GM12878 (cell line): ENCODE measurements at regions of chr2 and their contacts with region 1.

Region 1: DNA sequence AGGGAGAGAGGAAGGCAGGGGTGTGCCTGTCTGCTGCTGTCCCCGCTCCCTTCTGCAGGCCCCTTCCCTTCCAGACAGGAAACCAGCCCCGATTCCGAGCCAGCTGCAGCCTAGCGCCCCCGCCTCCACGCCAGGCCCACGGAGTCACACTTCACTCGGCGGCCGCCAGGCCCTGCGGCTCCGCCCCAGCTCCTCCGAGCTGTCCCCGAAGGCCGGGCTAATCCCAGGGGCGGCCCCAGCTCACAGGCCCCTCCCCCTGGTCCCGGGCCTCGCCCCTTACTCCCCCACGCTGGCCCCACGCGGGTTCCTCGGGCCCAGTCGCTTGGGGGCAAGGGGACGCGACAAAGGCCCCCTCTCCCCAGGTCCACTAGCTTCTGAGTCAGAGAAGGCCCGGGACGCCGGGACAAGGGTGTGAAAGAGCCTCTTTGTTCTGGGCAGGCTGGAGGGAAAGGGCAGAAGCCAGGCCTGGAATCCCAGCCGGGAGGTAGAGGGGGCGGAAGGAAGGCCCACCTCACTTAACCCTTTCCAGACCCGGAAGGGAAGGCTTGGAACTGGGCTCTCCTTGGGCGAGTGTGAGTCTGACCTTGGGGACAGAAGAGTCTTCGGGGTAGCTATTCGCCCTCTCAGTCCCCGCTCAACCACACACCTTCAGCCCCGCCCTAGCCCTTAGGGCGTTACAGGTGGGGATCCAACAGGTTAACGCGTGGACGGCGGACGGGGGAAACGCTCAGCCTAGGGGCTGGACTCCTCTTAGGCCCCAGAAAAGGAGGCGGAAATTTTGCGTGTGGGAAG is 1.2 kb downstream of the RTKN start:
- DNase-seq: no peak
- ATAC-seq: peak; percentile 98
- H3K4me3 ChIP-seq: peak overlapping the region; percentile 61; the same call in 1 of the 2 replicates
- H3K27ac ChIP-seq: 0 out of 2 replicates have a peak overlapping the region, but pooled peaks have one; percentile 2
- H3K4me1 ChIP-seq: peaks cover 23% of the 10 kb centered on the region
- H3K27me3 ChIP-seq: peaks cover 2 to 10% of the 10 kb centered on the region in 2 experiments; a peak in 3 of 4 replicates
- CTCF ChIP-seq: peak in 2 of 3 experiments; percentile 19 to 38; a peak in 3 of 6 replicates
- EP300 ChIP-seq: no peak
- POLR2A ChIP-seq: peak; percentile 77
- RAD21 ChIP-seq: no peak

Region 2: GRCh38 chr2:74364533-74365505 is 75.8 kb before region 1 on chr2:
- CTCF ChIA-PET with region 1: no interaction called
- POLR2A ChIA-PET with region 1: no interaction called
- RAD21 ChIA-PET with region 1: no interaction called
- SMC1A ChIA-PET with region 1: no interaction called
- in situ Hi-C with region 1: no loop called
- intact Hi-C with region 1: no loop called
- DNase-seq: no peak
- ATAC-seq: no peak
- H3K4me3 ChIP-seq: no peak overlapping the region
- H3K27ac ChIP-seq: no peak overlapping the region
- H3K4me1 ChIP-seq: no peaks in the 10 kb centered on the region
- H3K27me3 ChIP-seq: no peaks in the 10 kb centered on the region
- CTCF ChIP-seq: no peak
- EP300 ChIP-seq: no peak
- POLR2A ChIP-seq: no peak
- RAD21 ChIP-seq: no peak

Region 3: GRCh38 chr2:74421221-74421870 is 19.2 kb before region 1 on chr2 and contains the starts of genes C2orf81 and WDR54:
- CTCF ChIA-PET with region 1: interaction called, 6 read pairs
- POLR2A ChIA-PET with region 1: interaction called, 21 read pairs
- RAD21 ChIA-PET with region 1: interaction called, 6 read pairs
- SMC1A ChIA-PET with region 1: interaction called, 3 read pairs
- in situ Hi-C with region 1: no loop called
- intact Hi-C with region 1: no loop called
- DNase-seq: peak; percentile 84
- ATAC-seq: peak; percentile 96
- H3K4me3 ChIP-seq: peak within 1 kb of the TSS; percentile 78
- H3K27ac ChIP-seq: peak within 1 kb of the TSS; percentile 80
- H3K4me1 ChIP-seq: peaks cover 22% of the 10 kb centered on the region
- H3K27me3 ChIP-seq: no peaks in the 10 kb centered on the region
- CTCF ChIP-seq: no peak
- EP300 ChIP-seq: no peak
- POLR2A ChIP-seq: peak; percentile 98
- RAD21 ChIP-seq: no peak
- polyA plus RNA-seq, gene C2orf81: 0.10 to 0.27 TPM
- polyA plus RNA-seq, gene WDR54: 88.7 to 89.5 TPM

Region 4: DNA sequence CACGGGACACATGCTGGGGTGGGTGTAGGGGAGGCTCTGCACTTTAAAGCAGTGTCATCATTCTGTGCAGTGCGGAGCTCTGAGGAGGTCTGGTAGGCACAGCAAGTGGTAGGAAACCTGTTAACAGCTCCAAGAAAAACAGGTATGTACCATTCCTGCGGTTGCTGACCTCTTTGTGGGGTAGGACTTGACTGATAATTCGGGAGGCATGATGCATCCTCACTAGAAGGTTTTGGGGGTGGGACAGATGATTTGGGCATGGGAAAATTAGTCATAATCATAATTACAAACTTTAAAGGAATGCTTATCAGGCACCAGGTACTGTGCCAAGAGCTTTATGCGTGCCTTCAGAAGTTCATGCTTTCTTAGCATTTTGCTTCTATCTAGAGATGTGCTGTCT is 123.6 kb after region 1 on chr2:
- CTCF ChIA-PET with region 1: no interaction called
- POLR2A ChIA-PET with region 1: no interaction called
- RAD21 ChIA-PET with region 1: no interaction called
- SMC1A ChIA-PET with region 1: no interaction called
- in situ Hi-C with region 1: no loop called
- intact Hi-C with region 1: no loop called
- DNase-seq: no peak
- ATAC-seq: no peak
- H3K4me3 ChIP-seq: no peak overlapping the region
- H3K27ac ChIP-seq: no peak overlapping the region
- H3K4me1 ChIP-seq: peaks cover 35% of the 10 kb centered on the region
- H3K27me3 ChIP-seq: no peaks in the 10 kb centered on the region
- CTCF ChIP-seq: no peak
- EP300 ChIP-seq: no peak
- POLR2A ChIP-seq: no peak
- RAD21 ChIP-seq: no peak

Region 5: DNA sequence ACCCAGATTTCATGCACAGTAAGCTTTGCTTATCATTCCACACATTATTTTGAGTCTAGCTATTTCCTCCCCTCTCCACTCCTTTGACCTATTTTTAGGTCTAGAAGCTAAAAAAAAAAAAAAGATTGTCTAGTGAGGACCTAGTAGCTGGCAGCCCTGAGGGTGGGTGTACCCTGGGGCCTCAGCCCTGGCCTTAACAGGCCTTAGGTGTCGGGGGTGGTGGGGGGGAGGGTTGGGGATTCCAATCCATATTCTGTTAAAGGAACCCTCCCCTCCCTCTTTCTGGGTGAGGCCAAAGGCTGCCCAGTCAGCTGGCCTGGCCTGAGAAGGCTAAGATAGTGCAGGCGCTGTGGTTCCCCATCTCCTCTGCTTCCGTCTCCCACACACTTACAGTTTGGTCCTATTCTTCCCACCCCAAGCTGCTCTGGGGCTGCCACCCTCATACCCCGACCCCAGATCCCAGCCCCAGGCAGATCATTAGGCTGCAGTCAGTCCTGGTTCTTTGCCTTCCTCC is 327.9 kb after region 1 on chr2:
- CTCF ChIA-PET with region 1: no interaction called
- POLR2A ChIA-PET with region 1: no interaction called
- RAD21 ChIA-PET with region 1: no interaction called
- SMC1A ChIA-PET with region 1: no interaction called
- in situ Hi-C with region 1: no loop called
- intact Hi-C with region 1: no loop called
- DNase-seq: no peak
- ATAC-seq: no peak
- H3K4me3 ChIP-seq: no peak overlapping the region
- H3K27ac ChIP-seq: no peak overlapping the region
- H3K4me1 ChIP-seq: peaks cover 12% of the 10 kb centered on the region; the same call in 1 of the 2 replicates
- H3K27me3 ChIP-seq: no peaks in the 10 kb centered on the region
- CTCF ChIP-seq: no peak
- EP300 ChIP-seq: no peak
- POLR2A ChIP-seq: no peak
- RAD21 ChIP-seq: no peak

Region 6: GRCh38 chr2:75820693-75821092 is 1380.1 kb after region 1 on chr2:
- CTCF ChIA-PET with region 1: no interaction called
- POLR2A ChIA-PET with region 1: interaction called, 10 read pairs
- RAD21 ChIA-PET with region 1: no interaction called
- SMC1A ChIA-PET with region 1: no interaction called
- in situ Hi-C with region 1: no loop called
- intact Hi-C with region 1: no loop called
- DNase-seq: peak; percentile 24
- ATAC-seq: peak; percentile 60
- H3K4me3 ChIP-seq: no peak overlapping the region
- H3K27ac ChIP-seq: no peak overlapping the region
- H3K4me1 ChIP-seq: peaks cover 8% of the 10 kb centered on the region
- H3K27me3 ChIP-seq: no peaks in the 10 kb centered on the region
- CTCF ChIP-seq: no peak
- EP300 ChIP-seq: no peak
- POLR2A ChIP-seq: no peak
- RAD21 ChIP-seq: no peak